ENCODE measurements at regions of chr6 and their contacts with region 1.

Region 1: DNA sequence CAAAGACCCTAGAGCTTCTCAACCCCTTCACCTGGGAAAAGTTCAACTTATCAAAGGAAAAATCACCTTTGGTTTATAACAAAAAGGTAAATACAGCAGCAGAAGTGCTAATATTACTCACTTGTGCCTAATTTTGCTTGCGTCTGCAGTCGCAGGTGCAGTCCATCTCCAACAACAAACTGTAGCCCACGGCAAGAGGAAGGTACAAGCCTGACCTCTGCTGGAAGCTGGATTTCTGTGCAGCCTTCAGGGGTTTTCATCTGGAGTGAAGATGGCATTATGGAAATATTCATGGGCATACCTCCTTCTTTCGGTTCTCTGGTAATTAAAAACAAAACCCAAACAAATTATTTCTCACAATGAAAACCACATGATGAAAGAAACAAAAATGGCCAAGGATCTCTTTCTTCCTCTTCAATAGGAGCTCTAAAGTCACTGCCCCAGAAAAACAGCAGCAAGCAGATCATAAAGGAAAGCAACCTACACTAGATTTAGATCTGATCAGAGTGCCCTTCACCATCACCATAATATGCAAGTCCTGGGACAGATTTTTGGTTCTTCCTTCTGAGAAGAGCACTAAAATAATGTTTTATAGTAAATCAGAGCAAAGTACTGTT is 7.8 kb downstream of the UBE3D start:
- H3K4me3 ChIP-seq: no peak overlapping the region
- H3K27ac ChIP-seq: no peak overlapping the region
- H3K4me1 ChIP-seq: no peaks in the 10 kb centered on the region
- CTCF ChIP-seq: no peak

Region 2: DNA sequence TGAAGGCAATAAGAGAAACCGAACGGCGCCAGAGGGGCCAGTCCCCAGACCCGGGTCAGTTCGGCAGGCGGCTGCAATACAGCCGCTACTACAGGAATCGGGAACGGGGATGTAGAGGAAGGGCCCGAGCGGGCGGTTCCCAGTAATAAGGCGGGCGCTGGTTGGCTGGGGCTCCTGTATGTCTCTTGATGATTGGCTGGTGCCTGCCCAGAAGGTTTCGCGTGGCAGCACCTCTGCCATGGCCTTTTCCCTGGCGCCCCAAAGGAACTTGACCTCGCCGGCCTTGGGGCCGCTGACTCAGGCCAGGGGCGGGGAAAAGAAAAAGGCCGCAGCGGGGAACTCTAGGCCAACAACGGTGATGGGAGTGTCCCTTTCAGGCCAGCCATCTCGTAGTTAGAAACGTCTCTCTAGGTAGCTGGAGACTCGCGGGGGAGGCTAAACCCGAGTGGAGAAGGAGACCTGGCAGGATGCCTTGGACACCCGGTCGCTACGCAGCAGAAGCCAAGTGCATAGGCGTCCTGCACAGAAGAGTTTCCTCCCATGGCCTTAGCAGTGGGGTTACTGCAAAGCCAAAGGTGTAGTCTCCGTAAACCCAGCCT is 810.1 kb before region 1 on chr6 and contains the start of gene IBTK:
- CTCF ChIA-PET with region 1: interaction called, 15 read pairs
- POLR2A ChIA-PET with region 1: interaction called, 3 read pairs
- H3K4me3 ChIP-seq: peak within 1 kb of the TSS; percentile 78
- H3K27ac ChIP-seq: peak within 1 kb of the TSS; percentile 84
- H3K4me1 ChIP-seq: peaks cover 10% of the 10 kb centered on the region; the same call in 1 of the 2 replicates
- CTCF ChIP-seq: peak; percentile 35; the same call in 1 of the 2 replicates

Region 3: DNA sequence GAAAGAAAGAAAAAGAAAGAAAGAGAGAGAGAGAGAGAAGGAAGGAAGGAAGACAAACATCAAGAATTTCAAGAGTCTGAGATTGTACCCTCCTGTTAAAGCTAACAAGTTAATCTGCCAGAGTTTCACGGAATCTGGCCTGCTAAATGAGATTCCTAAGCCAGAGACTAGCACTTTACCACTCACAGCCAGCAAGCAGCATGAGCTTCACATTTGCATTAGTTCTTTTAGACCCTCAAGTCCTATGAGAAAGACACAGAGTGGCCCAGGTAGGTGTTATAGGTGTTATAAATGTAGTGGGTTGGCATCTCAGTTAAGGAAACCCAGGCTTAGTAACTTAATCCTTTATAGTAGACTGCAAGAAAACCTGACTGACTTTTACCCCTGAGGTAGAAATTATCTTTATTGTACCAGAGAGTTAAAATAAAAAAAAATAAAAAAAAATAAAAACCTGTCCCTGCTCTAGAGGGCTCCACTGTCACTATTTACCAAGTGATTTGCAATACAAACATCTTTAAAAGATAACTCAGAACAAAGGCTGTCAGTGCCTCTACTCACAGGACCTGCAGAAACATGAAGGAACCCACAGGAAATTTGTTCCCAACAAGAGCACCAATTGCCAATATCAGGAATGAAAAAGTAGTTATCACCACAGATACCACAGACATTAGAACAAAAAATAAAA is 800.6 kb before region 1 on chr6:
- CTCF ChIA-PET with region 1: interaction called, 16 read pairs
- POLR2A ChIA-PET with region 1: interaction called, 7 read pairs
- H3K4me3 ChIP-seq: no peak overlapping the region
- H3K27ac ChIP-seq: no peak overlapping the region
- H3K4me1 ChIP-seq: peaks cover 25% of the 10 kb centered on the region
- CTCF ChIP-seq: no peak; the same call in 1 of the 2 replicates

Region 4: GRCh38 chr6:83047065-83047754 is 10.6 kb before region 1 on chr6:
- CTCF ChIA-PET with region 1: interaction called, 12 read pairs
- POLR2A ChIA-PET with region 1: no interaction called
- H3K4me3 ChIP-seq: no peak overlapping the region
- H3K27ac ChIP-seq: no peak overlapping the region
- H3K4me1 ChIP-seq: peaks cover 16% of the 10 kb centered on the region; the same call in 1 of the 2 replicates
- CTCF ChIP-seq: no peak

Region 5: GRCh38 chr6:83252717-83253116 is 194.9 kb after region 1 on chr6:
- CTCF ChIA-PET with region 1: no interaction called
- POLR2A ChIA-PET with region 1: no interaction called
- H3K4me3 ChIP-seq: no peak overlapping the region
- H3K27ac ChIP-seq: no peak overlapping the region
- H3K4me1 ChIP-seq: no peaks in the 10 kb centered on the region
- CTCF ChIP-seq: no peak

Measured in HEK293 (cell line).